ENCODE measurements at regions of chr17 and their contacts with region 1.

Region 1: DNA sequence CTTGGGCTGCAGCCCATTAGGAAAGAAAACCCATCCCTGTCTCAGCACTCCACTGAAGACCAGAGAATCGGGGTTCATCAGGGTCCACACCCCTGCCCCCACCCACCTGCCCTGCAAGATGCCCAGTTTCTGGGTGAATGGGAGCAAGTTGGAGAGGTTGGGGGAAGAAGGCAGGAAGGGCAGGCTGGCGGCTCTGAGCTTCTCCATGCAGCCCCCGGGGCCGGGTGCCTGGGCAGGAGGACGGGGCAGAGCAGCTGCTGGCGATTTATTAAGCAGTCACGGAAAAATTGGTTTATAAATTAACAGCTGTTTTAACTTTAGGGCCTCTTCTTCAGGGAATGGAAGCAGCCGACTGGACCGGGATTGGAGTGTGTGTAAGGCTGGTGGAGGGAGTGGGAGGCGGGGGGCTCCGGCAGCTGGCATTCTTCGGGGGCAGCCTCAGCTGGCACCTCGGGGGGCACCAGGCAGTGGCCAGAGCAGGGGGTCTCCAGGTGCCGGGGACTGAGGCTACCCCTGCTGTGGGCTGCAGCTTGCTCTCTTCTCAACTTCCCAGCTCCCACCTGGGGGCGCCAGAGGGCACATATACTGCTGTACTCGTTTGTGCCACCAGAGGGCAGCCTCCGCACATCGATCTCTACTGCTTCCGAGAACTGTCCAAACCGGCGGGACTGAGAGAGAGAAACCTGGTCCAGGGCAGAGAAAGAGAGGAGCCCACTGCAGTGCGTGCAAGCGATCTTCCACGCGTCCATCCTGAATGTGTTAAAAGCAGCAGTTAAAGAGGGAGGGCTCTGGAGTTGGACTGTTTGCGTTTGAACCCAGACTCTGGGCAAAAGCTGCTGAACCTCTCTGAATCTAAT is 5.0 kb upstream of the PPP1R1B start:
- DNase-seq: peak; percentile 84
- ATAC-seq: peak; percentile 51
- H3K4me3 ChIP-seq: peak overlapping the region; percentile 48; the same call in 1 of the 2 replicates
- H3K27ac ChIP-seq: no peak overlapping the region
- H3K4me1 ChIP-seq: no peaks in the 10 kb centered on the region
- H3K27me3 ChIP-seq: peaks cover 3% of the 10 kb centered on the region
- CTCF ChIP-seq: peak; percentile 99

Region 2: DNA sequence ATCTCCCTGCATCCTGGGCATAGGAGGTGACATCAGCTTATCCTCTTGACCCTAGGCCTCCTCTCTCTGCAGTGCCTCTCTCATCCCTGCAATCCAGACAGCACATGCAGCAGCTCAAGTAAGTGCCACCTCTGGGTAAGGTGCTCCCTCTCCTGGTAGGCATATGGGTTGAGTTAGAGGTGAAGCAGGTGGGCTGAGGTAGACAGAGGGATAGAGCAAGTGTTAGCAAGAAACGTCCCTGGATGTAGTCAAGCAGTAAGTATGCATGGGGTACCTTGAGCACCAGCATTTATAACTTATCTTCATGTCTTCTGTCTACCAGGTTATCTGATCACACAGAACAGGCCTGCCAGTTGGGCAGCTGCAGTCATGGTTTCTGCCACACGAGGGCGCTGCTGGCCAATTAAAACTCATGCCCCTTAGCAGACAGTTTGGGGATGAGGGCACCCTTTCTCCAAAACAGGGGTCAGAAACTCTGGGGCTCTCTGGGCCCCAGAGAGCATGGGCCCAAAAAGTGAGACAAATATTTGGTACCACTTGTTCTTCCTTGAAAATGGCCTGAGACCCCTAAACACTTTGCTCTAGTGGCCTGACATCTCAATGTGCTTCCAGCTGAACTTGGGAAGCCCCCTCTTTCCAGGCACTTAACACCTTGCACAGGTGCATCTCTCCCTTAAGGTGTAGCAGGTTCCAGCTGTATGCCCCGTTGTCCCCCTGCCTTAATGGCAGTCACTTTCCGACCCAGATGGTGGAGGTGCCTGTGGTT is 73.9 kb before region 1 on chr17:
- CTCF ChIA-PET with region 1: interaction called, 12 read pairs
- POLR2A ChIA-PET with region 1: no interaction called
- intact Hi-C with region 1: loop called (anchors 2 kb)
- DNase-seq: peak; percentile 55
- ATAC-seq: peak; percentile 88
- H3K4me3 ChIP-seq: no peak overlapping the region
- H3K27ac ChIP-seq: no peak overlapping the region
- H3K4me1 ChIP-seq: no peaks in the 10 kb centered on the region
- H3K27me3 ChIP-seq: no peaks in the 10 kb centered on the region
- CTCF ChIP-seq: peak; percentile 98

Region 3: GRCh38 chr17:39573447-39574298 is 48.1 kb before region 1 on chr17:
- CTCF ChIA-PET with region 1: no interaction called
- POLR2A ChIA-PET with region 1: no interaction called
- intact Hi-C with region 1: loop called (anchors 1 kb)
- DNase-seq: peak; percentile 63
- ATAC-seq: peak; percentile 97
- H3K4me3 ChIP-seq: peak overlapping the region; percentile 75
- H3K27ac ChIP-seq: no peak overlapping the region
- H3K4me1 ChIP-seq: peaks cover 4% of the 10 kb centered on the region; the same call in 1 of the 2 replicates
- H3K27me3 ChIP-seq: no peaks in the 10 kb centered on the region
- CTCF ChIP-seq: no peak

Region 4: GRCh38 chr17:39711851-39712250 is 90.1 kb after region 1 on chr17:
- CTCF ChIA-PET with region 1: no interaction called
- POLR2A ChIA-PET with region 1: no interaction called
- intact Hi-C with region 1: no loop called
- DNase-seq: no peak
- ATAC-seq: no peak
- H3K4me3 ChIP-seq: no peak overlapping the region
- H3K27ac ChIP-seq: no peak overlapping the region
- H3K4me1 ChIP-seq: peaks cover 6% of the 10 kb centered on the region
- H3K27me3 ChIP-seq: no peaks in the 10 kb centered on the region
- CTCF ChIP-seq: no peak

Region 5: GRCh38 chr17:39754161-39754951 is 132.6 kb after region 1 on chr17:
- CTCF ChIA-PET with region 1: interaction called, 6 read pairs
- POLR2A ChIA-PET with region 1: no interaction called
- intact Hi-C with region 1: loop called (anchors 5 kb)
- DNase-seq: peak; percentile 89
- ATAC-seq: peak; percentile 92
- H3K4me3 ChIP-seq: peak overlapping the region; percentile 75
- H3K27ac ChIP-seq: peak overlapping the region; percentile 43; the same call in 1 of the 2 replicates
- H3K4me1 ChIP-seq: peaks cover 6% of the 10 kb centered on the region; the same call in 1 of the 2 replicates
- H3K27me3 ChIP-seq: no peaks in the 10 kb centered on the region
- CTCF ChIP-seq: peak; percentile 67